ENCODE measurements at regions of chr12 and their contacts with region 1.

Region 1: GRCh38 chr12:96516472-96517430 is 27.4 kb downstream of the CFAP54 start:
- DNase-seq: peak; percentile 93
- ATAC-seq: peak; percentile 85
- H3K4me3 Mint-ChIP-seq: peak overlapping the region; percentile 19
- H3K27ac Mint-ChIP-seq: peak overlapping the region; percentile 76
- H3K4me1 Mint-ChIP-seq: peaks cover 20% of the 10 kb centered on the region
- H3K27me3 Mint-ChIP-seq: no peaks in the 10 kb centered on the region

Region 2: DNA sequence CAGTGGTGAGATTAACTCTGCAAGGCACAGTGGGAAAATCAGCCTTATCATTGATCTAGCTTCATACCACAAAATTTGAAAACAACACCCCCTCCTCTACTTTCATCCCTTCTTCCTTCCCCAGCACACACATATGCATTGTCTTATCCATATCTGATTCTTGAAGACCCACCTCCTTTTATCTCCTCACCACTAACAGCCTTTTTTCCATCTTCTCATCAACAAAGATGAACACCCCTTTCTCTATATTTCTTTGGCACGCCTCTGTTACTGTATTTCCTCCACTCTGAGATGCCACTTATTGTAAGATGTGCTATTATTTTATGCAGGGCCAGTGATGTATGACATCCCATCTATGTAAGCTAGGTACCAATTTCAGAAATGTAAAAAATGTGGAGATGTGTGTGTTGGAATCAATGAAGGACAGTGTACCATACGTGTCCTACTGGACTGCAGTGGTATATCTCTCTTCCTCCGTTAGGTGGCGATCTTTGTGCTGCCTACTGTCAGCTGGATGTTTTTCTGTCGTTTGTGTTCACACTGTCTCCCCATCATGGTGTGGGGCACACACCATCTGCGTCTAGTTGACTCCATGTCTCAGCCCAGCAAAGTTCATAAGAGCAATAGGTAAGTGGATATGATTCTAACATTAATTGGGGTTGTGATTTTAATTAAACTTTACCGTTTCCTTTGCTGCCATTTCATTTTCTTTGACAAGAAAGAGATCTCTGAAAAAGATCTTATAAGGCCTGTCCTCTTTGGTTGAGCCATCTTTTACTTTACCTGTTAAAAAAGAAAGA is 598.4 kb before region 1 on chr12:
- CTCF ChIA-PET with region 1: interaction called, 12 read pairs
- POLR2A ChIA-PET with region 1: no interaction called
- DNase-seq: peak; percentile 63
- ATAC-seq: peak; percentile 96
- H3K4me3 Mint-ChIP-seq: no peak overlapping the region
- H3K27ac Mint-ChIP-seq: no peak overlapping the region
- H3K4me1 Mint-ChIP-seq: no peaks in the 10 kb centered on the region
- H3K27me3 Mint-ChIP-seq: peaks cover 12% of the 10 kb centered on the region

Region 3: GRCh38 chr12:96208801-96209549 is 307.8 kb before region 1 on chr12:
- CTCF ChIA-PET with region 1: interaction called, 16 read pairs
- POLR2A ChIA-PET with region 1: no interaction called
- DNase-seq: no peak
- ATAC-seq: no peak
- H3K4me3 Mint-ChIP-seq: peak overlapping the region; percentile 24
- H3K27ac Mint-ChIP-seq: peak overlapping the region; percentile 47
- H3K4me1 Mint-ChIP-seq: peaks cover 91% of the 10 kb centered on the region
- H3K27me3 Mint-ChIP-seq: no peaks in the 10 kb centered on the region

Region 4: DNA sequence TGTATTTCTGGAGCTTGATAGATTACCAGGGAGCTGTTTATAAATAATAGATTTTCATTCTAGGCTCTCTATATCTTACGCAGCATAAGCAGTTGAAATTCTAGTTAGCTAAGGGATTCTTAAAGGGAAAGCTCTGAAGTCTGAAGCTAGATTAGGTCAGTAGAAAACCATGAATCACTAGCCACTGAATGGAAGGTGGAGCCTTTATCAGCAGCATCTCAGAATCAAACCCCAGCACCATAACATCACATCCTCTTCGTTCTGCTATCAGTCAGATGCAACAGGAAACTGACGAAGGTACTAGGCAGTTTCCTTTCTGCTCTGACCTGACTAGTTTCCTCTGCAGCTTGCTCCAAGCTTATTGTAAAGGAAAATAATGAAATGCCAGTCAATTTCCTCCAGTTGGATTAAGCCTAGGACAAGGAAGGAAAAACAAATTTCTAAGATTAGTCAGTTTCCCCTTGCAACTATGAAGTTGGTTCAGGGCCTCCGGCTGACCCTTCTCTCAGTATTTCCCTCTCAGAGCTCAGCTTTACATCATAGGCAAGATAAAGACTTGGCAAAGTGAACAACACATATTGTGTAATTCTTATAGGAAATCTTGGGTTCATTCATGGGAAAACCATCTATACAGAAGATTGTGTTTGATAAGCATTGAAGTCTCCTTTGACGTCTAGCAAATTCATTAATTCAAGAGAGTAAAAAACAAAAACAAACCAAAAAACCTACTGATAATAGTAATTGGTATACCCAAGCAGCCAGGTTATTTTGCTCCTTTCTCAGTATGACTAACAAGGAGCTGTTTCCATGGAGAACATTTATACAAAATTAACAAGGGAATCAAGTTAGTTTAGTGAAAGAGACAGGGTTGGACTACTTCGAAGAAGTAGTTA is 70.8 kb before region 1 on chr12:
- CTCF ChIA-PET with region 1: interaction called, 14 read pairs
- POLR2A ChIA-PET with region 1: interaction called, 6 read pairs
- DNase-seq: peak; percentile 85
- ATAC-seq: peak; percentile 97
- H3K4me3 Mint-ChIP-seq: peak overlapping the region; percentile 66
- H3K27ac Mint-ChIP-seq: peak overlapping the region; percentile 97
- H3K4me1 Mint-ChIP-seq: peaks cover 54% of the 10 kb centered on the region
- H3K27me3 Mint-ChIP-seq: no peaks in the 10 kb centered on the region

Region 5: DNA sequence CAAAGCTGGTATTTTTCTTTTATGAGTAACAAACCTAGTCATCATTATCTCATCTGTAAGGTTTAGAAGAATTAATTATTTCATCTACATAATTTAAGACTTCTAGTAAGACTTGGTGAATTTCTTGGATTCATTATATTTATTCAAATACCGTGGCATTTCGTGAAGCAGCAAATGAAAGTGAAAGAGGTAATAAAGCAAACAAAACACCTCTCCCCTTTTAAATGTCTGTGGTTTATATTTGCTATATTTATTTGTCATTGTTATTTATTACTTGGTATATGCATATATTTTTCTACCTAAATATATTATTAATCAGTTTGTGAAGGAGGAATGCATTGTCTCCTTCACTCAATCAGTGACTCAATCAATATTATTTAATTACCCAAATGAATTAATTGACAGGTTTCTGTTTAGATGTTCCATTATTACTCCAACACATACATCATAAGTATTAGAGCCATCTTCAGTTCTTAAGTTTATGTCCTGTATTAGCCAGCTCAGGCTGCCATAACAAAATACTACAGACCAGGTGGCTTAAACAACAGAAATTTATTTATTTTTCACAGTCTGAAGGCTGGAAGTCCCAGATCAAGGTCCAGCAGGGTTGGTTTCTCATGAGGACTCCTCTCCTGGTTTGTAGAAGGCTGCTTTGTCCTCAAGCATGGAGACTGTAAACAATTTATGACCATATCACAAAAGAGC is 20.8 kb before region 1 on chr12:
- CTCF ChIA-PET with region 1: interaction called, 12 read pairs
- POLR2A ChIA-PET with region 1: no interaction called
- DNase-seq: no peak
- ATAC-seq: no peak
- H3K4me3 Mint-ChIP-seq: peak overlapping the region; percentile 32
- H3K27ac Mint-ChIP-seq: no peak overlapping the region
- H3K4me1 Mint-ChIP-seq: peaks cover 35% of the 10 kb centered on the region
- H3K27me3 Mint-ChIP-seq: peaks cover 7% of the 10 kb centered on the region